T-cell (primary cell): ENCODE measurements at regions of chr1 and their contacts with region 1.

Region 1: DNA sequence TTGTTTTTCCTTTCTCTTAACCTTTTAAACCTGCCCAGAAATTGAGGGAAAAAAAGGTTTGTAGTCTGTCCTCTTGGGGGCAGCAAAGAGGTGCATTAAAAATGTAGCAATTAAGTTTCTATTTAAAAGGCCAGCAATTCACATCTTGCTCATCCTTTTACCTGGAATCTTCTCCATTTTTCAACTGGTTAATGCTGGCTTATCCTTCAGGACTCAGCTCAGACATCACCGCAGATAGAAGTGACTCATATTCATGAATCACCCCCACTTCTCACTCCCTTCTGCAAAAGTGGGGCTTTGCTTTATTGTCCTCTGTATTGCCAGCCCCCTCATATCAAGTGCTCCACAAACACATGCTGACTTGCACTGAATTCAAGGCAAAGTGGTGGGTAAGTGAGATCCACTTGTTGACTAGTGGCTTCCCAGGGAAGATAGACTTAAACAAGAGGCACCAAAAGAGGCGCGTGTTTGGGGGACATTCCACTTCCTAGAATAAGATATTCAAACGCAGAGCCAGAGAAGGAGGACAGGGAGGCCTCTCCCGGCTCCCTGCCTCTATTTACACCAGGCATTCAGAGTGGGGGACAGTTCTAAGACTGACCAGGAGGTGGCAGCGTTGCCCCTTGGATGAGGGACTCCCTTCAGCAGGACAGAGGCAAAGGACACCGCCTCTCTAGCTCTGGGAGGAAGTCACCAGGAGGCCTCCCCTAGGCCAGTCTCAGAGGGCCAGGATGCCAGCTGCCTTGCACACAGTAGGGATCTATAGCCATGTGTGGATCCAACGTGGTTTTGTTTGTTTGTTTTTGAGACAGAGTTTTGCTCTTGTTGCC is 23.2 kb upstream of the ZNF648 start:
- DNase-seq: peak; percentile 38 to 85 (median 67)
- ATAC-seq: peak; percentile 68 to 76 (median 74)
- H3K4me3 ChIP-seq: no peak overlapping the region
- H3K4me3 Mint-ChIP-seq: peak overlapping the region in 2 of 3 donors; percentile 37 to 39
- H3K27ac ChIP-seq: peak overlapping the region; percentile 25
- H3K27ac Mint-ChIP-seq: peak overlapping the region; percentile 91 to 95
- H3K4me1 ChIP-seq: peaks cover 22 to 51% of the 10 kb centered on the region in 2 experiments
- H3K4me1 Mint-ChIP-seq: peaks cover 44 to 49% (median 49%) of the 10 kb centered on the region in 3 donors
- H3K27me3 ChIP-seq: no peaks in the 10 kb centered on the region
- H3K27me3 Mint-ChIP-seq: no peaks in the 10 kb centered on the region

Region 2: DNA sequence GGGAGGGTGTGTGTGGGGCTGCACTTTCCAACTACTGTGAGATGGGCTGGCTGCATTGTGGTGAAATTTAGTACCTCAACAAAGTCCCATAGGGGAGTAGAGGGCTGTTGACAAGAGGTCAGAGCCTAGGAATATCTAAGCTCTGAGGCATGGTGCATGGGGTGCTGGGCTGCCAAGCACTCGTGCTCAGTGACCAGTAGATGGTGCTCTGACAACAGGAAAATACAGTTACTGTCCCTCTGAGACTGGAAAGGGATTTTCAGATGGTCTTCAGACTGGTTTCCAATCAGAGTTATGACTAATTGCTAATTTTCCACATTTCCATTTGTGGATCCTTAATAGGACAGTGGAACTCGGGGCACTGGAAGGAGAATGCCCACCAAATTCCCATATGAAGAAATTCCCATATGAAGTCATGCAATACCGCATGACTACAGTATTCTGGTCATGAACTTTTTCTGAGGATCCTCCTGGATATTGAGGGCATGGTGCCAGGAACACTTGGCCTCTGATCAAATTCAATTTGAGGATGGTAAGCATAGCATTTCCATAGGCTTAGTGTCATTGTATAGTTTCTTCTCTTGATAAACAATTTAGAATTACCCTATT is 605.5 kb before region 1 on chr1:
- CTCF ChIA-PET with region 1: interaction called, 6 to 11 read pairs
- POLR2A ChIA-PET with region 1: no interaction called
- DNase-seq: peak in 9 of 35 experiments; percentile 5 to 60 (median 9)
- ATAC-seq: peak in 2 of 4 experiments; percentile 56 to 57
- H3K4me3 ChIP-seq: no peak overlapping the region
- H3K4me3 Mint-ChIP-seq: no peak overlapping the region
- H3K27ac ChIP-seq: no peak overlapping the region
- H3K27ac Mint-ChIP-seq: no peak overlapping the region
- H3K4me1 ChIP-seq: no peaks in the 10 kb centered on the region
- H3K4me1 Mint-ChIP-seq: peaks cover 8 to 13% (median 11%) of the 10 kb centered on the region in 3 donors
- H3K27me3 ChIP-seq: peaks cover 10 to 35% of the 10 kb centered on the region in 2 experiments
- H3K27me3 Mint-ChIP-seq: peaks cover 36 to 40% of the 10 kb centered on the region in 2 donors

Region 3: GRCh38 chr1:182101415-182102042 is 16.8 kb after region 1 on chr1:
- CTCF ChIA-PET with region 1: no interaction called
- POLR2A ChIA-PET with region 1: no interaction called
- DNase-seq: no peak
- ATAC-seq: no peak
- H3K4me3 ChIP-seq: no peak overlapping the region
- H3K4me3 Mint-ChIP-seq: no peak overlapping the region
- H3K27ac ChIP-seq: no peak overlapping the region
- H3K27ac Mint-ChIP-seq: no peak overlapping the region
- H3K4me1 ChIP-seq: no peaks in the 10 kb centered on the region
- H3K4me1 Mint-ChIP-seq: no peaks in the 10 kb centered on the region
- H3K27me3 ChIP-seq: peaks cover 3 to 7% of the 10 kb centered on the region in 2 experiments
- H3K27me3 Mint-ChIP-seq: peaks cover 9 to 12% of the 10 kb centered on the region in 2 donors

Region 4: DNA sequence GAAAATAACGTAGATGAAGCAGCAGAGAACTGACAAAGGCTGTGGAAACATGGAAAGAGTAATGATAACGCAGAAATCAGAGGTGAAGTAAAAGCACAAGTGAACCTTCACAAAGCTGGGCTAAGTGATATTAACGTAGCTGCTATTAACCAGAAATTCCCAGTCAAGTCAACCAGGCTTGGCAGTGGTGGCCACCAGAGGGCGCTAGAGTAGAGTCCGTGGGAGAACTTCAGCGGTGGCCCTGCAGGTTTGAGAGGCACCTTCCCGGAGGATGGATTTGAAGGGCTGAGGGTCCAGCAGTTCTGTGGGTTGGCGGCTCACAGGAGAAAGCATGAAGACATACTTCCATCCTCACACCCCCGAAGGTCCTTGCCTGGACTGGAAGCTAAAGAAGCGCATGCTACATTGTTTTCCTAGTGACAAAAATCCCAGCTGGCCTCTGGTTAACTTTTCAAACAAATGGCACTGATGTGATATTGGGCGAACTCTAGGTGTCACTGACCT is 58.5 kb after region 1 on chr1:
- CTCF ChIA-PET with region 1: interaction called, 10 to 11 read pairs
- POLR2A ChIA-PET with region 1: no interaction called
- DNase-seq: peak; percentile 58 to 91 (median 83)
- ATAC-seq: peak; percentile 74 to 82 (median 78)
- H3K4me3 ChIP-seq: no peak overlapping the region
- H3K4me3 Mint-ChIP-seq: no peak overlapping the region
- H3K27ac ChIP-seq: no peak overlapping the region
- H3K27ac Mint-ChIP-seq: peak overlapping the region in 1 of 2 donors; percentile 41
- H3K4me1 ChIP-seq: peaks cover 0 to 3% of the 10 kb centered on the region in 2 experiments
- H3K4me1 Mint-ChIP-seq: peaks cover 4 to 11% (median 5%) of the 10 kb centered on the region in 3 donors
- H3K27me3 ChIP-seq: peaks cover 0 to 14% of the 10 kb centered on the region in 2 experiments
- H3K27me3 Mint-ChIP-seq: peaks cover 0 to 4% of the 10 kb centered on the region in 2 donors